Endothelial cell of umbilical vein (primary cell): ENCODE measurements at regions of chr19 and their contacts with region 1.

Region 1: GRCh38 chr19:56314562-56315077 is at the start of gene ZSCAN5A:
- DNase-seq: peak; percentile 98
- H3K4me3 ChIP-seq: peak within 1 kb of the TSS; percentile 66 to 89 (median 76)
- H3K27ac ChIP-seq: peak within 1 kb of the TSS; percentile 98
- H3K4me1 ChIP-seq: peaks cover 12% of the 10 kb centered on the region
- H3K27me3 ChIP-seq: no peaks in the 10 kb centered on the region
- CTCF ChIP-seq: no peak
- POLR2A ChIP-seq: peak; percentile 54
- total RNA-seq, gene ZSCAN5A: 12.0 and 12.2 TPM in 2 replicates

Region 2: DNA sequence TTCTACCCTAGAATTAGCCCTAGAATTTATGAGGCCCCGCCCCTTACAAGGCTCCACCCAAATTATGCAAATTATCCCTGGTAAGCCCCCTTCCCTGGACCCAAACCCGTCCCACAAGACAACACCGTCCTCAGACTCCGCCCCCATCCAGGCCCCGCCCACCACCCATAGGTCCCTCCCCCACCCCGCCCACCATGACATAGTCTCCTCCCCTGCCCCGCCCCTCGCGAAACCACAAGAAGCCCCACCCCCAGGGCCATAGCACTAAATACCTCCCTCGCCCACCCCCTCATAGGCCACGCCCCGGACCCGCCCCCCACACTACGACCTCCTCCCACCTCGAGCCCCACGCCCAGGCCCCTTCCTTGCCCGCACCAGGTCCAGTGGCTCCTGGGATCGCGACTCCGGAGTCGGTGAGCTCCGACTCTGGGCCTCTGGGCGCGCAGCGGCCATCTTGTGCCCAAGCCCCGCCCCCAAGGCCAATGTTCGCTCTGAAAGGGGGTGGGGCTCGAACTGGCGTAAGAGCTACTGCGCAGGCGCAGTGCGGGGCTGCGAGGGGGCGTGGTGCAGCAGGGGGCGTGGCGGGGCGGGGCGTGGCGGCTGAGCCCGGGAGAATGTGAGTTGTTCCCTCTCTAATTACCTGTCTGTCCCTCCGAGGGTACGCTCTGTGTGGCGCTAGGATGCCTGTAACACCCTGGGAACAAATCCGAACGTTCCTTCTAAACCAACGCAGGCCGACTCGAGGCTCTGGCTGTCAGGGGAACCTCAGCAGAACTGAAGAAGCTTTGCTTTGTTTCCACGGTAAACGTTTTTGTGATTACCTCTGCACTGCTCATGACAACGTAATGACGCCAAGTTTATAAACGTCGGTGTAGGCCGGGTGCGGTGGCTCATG is 690.3 kb before region 1 on chr19 and contains the start of gene ZNF784:
- CTCF ChIA-PET with region 1: no interaction called
- POLR2A ChIA-PET with region 1: interaction called, 10 read pairs
- dilution Hi-C with region 1: no loop called
- intact Hi-C with region 1: no loop called
- DNase-seq: peak; percentile 92
- H3K4me3 ChIP-seq: peak within 1 kb of the TSS; percentile 58 to 78 (median 74)
- H3K27ac ChIP-seq: peak within 1 kb of the TSS; percentile 54
- H3K4me1 ChIP-seq: peaks cover 6% of the 10 kb centered on the region
- H3K27me3 ChIP-seq: no peaks in the 10 kb centered on the region
- CTCF ChIP-seq: no peak
- POLR2A ChIP-seq: peak; percentile 80
- total RNA-seq, gene ZNF784: 4.9 and 7.1 TPM in 2 replicates

Region 3: GRCh38 chr19:56121180-56122167 is 193.1 kb before region 1 on chr19 and contains the start of gene ZNF787:
- CTCF ChIA-PET with region 1: no interaction called
- POLR2A ChIA-PET with region 1: no interaction called
- dilution Hi-C with region 1: no loop called
- intact Hi-C with region 1: loop called (anchors 1 kb)
- DNase-seq: peak; percentile 97
- H3K4me3 ChIP-seq: peak within 1 kb of the TSS; percentile 39 to 60 (median 50)
- H3K27ac ChIP-seq: peak within 1 kb of the TSS; percentile 84
- H3K4me1 ChIP-seq: peaks cover 18% of the 10 kb centered on the region
- H3K27me3 ChIP-seq: no peaks in the 10 kb centered on the region
- CTCF ChIP-seq: no peak
- POLR2A ChIP-seq: peak; percentile 53
- total RNA-seq, gene ZNF787: 31.8 and 32.7 TPM in 2 replicates

Region 4: DNA sequence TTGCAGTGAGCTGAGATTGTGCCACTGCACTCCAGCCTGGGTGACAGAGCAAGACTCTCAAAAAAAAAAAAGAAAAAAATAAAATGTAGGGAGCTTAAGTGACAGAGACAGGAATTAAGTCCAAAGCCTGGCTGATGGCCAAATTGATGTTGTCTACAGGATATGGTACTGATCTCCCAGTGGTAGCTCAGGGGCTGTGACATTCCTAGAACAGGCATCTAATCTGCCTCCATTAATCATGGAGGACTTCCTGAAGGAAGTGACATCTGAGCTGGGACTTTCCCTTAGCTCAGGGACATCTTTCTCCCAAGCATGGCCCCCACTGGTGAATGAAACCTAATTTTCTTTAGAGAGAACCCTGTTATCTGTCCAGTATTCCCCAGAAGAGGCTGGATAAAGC is 53.5 kb before region 1 on chr19:
- CTCF ChIA-PET with region 1: interaction called, 254 read pairs
- POLR2A ChIA-PET with region 1: no interaction called
- dilution Hi-C with region 1: no loop called
- intact Hi-C with region 1: no loop called
- DNase-seq: peak; percentile 13
- H3K4me3 ChIP-seq: no peak overlapping the region
- H3K27ac ChIP-seq: peak overlapping the region; percentile 6
- H3K4me1 ChIP-seq: peaks cover 6% of the 10 kb centered on the region
- H3K27me3 ChIP-seq: no peaks in the 10 kb centered on the region
- CTCF ChIP-seq: no peak
- POLR2A ChIP-seq: no peak

Region 5: GRCh38 chr19:56350416-56351045 is 35.9 kb after region 1 on chr19:
- CTCF ChIA-PET with region 1: interaction called, 11 read pairs
- POLR2A ChIA-PET with region 1: no interaction called
- dilution Hi-C with region 1: no loop called
- intact Hi-C with region 1: no loop called
- DNase-seq: peak; percentile 55
- H3K4me3 ChIP-seq: no peak overlapping the region
- H3K27ac ChIP-seq: no peak overlapping the region
- H3K4me1 ChIP-seq: no peaks in the 10 kb centered on the region
- H3K27me3 ChIP-seq: no peaks in the 10 kb centered on the region
- CTCF ChIP-seq: peak; percentile 56 to 75
- POLR2A ChIP-seq: no peak

Region 6: GRCh38 chr19:56377104-56377924 is 62.7 kb after region 1 on chr19:
- CTCF ChIA-PET with region 1: no interaction called
- POLR2A ChIA-PET with region 1: no interaction called
- dilution Hi-C with region 1: no loop called
- intact Hi-C with region 1: no loop called
- DNase-seq: no peak
- H3K4me3 ChIP-seq: no peak overlapping the region
- H3K27ac ChIP-seq: no peak overlapping the region
- H3K4me1 ChIP-seq: no peaks in the 10 kb centered on the region
- H3K27me3 ChIP-seq: no peaks in the 10 kb centered on the region
- CTCF ChIP-seq: no peak
- POLR2A ChIP-seq: no peak

Region 7: DNA sequence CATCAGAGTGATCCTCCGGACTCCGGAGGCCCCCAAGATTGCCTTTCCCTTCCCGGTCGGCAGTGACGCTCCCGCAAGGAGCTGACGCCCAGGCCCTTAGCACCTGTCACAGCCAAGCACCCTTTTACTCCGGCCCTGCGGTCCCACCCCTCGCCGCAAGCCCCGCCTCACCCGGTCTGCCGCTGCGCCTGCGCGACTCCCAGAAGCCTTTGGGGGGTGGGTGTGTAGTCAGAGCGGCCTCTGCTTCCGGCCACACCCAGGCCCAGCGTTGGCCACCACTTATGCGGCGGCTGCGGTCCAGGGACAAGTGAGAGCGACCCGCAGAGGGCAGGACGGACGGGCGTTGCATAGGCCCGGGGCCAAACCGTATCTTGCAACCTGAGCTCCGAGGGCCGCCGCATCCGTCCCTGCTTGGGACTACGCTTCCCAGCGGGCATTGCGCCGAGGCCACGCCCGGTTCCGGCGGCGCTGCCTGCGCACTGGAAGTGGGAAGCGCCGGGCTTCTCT is 223.7 kb after region 1 on chr19:
- CTCF ChIA-PET with region 1: no interaction called
- POLR2A ChIA-PET with region 1: no interaction called
- dilution Hi-C with region 1: no loop called
- intact Hi-C with region 1: loop called (anchors 1 kb)
- DNase-seq: peak; percentile 93
- H3K4me3 ChIP-seq: peak overlapping the region; percentile 63 to 97 (median 66)
- H3K27ac ChIP-seq: peak overlapping the region; percentile 63
- H3K4me1 ChIP-seq: peaks cover 9% of the 10 kb centered on the region
- H3K27me3 ChIP-seq: no peaks in the 10 kb centered on the region
- CTCF ChIP-seq: no peak
- POLR2A ChIP-seq: no peak